ENCODE measurements at regions of chr3 and their contacts with region 1.

Region 1: GRCh38 chr3:33717866-33718594 is at the start of gene CLASP2:
- DNase-seq: peak; percentile 95
- ATAC-seq: peak; percentile 85
- H3K4me3 ChIP-seq: peak within 1 kb of the TSS; percentile 85 to 96 (median 92)
- H3K4me3 Mint-ChIP-seq: peak within 1 kb of the TSS; percentile 99
- H3K27ac ChIP-seq: peak within 1 kb of the TSS; percentile 90 to 94
- H3K27ac Mint-ChIP-seq: peak within 1 kb of the TSS; percentile 99
- H3K4me1 ChIP-seq: peaks cover 19 to 21% of the 10 kb centered on the region in 2 donors
- H3K4me1 Mint-ChIP-seq: peaks cover 20% of the 10 kb centered on the region
- H3K27me3 ChIP-seq: no peaks in the 10 kb centered on the region
- H3K27me3 Mint-ChIP-seq: no peaks in the 10 kb centered on the region
- CTCF ChIP-seq: no peak
- total RNA-seq, gene CLASP2: 109 and 113 TPM in 2 replicates

Region 2: DNA sequence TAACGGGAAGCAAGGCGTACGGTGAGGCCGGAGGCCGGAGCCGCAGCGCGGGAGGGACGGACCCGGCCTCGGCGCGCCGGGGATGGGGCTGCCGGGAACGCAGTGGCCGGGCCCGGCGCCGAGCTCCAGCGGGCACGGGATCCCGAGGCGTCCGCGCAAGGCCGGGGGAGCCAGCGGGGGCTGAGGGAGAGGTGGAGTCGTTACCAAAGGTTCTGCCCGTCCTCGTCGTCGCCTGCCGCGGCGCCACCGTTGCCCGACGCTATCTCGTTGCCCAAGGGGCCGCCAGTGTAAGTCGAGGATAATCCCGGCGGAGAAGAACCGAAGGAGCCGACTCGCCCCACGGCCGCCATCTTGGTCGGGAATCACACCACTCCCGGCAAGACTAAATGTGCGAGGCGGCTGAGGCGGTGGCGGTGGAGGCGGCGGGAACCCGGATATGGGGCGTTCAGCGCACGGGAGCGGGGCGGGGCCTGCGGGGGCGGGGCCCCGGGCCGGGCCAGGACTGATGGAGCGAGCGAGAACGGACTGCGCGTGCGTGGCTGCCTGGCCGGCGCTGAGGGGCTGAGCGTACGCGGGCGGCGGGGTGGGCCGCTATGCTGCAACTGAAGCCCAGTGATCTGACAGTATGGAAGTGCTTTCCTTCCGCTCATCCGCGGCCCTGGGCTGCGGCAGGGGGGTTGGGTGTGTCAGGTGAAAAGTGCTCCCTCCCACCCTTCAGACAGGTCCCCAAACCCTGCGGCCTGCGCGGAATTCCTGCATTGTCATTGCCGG is 1147.4 kb before region 1 on chr3 and contains the start of gene DYNC1LI1:
- CTCF ChIA-PET with region 1: no interaction called
- POLR2A ChIA-PET with region 1: no interaction called
- intact Hi-C with region 1: loop called (anchors 5 kb)
- DNase-seq: peak; percentile 95
- ATAC-seq: peak; percentile 96
- H3K4me3 ChIP-seq: peak within 1 kb of the TSS; percentile 55 to 96 (median 92)
- H3K4me3 Mint-ChIP-seq: peak within 1 kb of the TSS; percentile 94
- H3K27ac ChIP-seq: peak within 1 kb of the TSS; percentile 84 to 93
- H3K27ac Mint-ChIP-seq: peak within 1 kb of the TSS; percentile 94
- H3K4me1 ChIP-seq: peaks cover 22 to 24% of the 10 kb centered on the region in 2 donors
- H3K4me1 Mint-ChIP-seq: peaks cover 29% of the 10 kb centered on the region
- H3K27me3 ChIP-seq: no peaks in the 10 kb centered on the region
- H3K27me3 Mint-ChIP-seq: no peaks in the 10 kb centered on the region
- CTCF ChIP-seq: no peak
- total RNA-seq, gene DYNC1LI1: 38.8 and 47.8 TPM in 2 replicates

Region 3: GRCh38 chr3:33113772-33114621 is 604.0 kb before region 1 on chr3 and contains the start of gene CRTAP:
- CTCF ChIA-PET with region 1: no interaction called
- POLR2A ChIA-PET with region 1: no interaction called
- intact Hi-C with region 1: loop called (anchors 5 kb)
- DNase-seq: peak; percentile 89
- ATAC-seq: peak; percentile 87
- H3K4me3 ChIP-seq: peak within 1 kb of the TSS; percentile 59 to 82 (median 74)
- H3K4me3 Mint-ChIP-seq: peak within 1 kb of the TSS; percentile 94
- H3K27ac ChIP-seq: peak within 1 kb of the TSS; percentile 69 to 76
- H3K27ac Mint-ChIP-seq: peak within 1 kb of the TSS; percentile 94
- H3K4me1 ChIP-seq: peaks cover 43 to 44% of the 10 kb centered on the region in 2 donors
- H3K4me1 Mint-ChIP-seq: peaks cover 48% of the 10 kb centered on the region
- H3K27me3 ChIP-seq: no peaks in the 10 kb centered on the region
- H3K27me3 Mint-ChIP-seq: no peaks in the 10 kb centered on the region
- CTCF ChIP-seq: no peak
- total RNA-seq, gene CRTAP: 55.0 and 57.7 TPM in 2 replicates

Region 4: GRCh38 chr3:33440323-33441232 is 277.5 kb before region 1 on chr3 and contains the start of gene UBP1:
- CTCF ChIA-PET with region 1: no interaction called
- POLR2A ChIA-PET with region 1: interaction called, 4 read pairs
- intact Hi-C with region 1: loop called (anchors 1 kb)
- DNase-seq: peak; percentile 99
- ATAC-seq: peak; percentile 82
- H3K4me3 ChIP-seq: peak within 1 kb of the TSS; percentile 78 to 100 (median 96)
- H3K4me3 Mint-ChIP-seq: peak within 1 kb of the TSS; percentile 100
- H3K27ac ChIP-seq: peak within 1 kb of the TSS; percentile 95 to 97
- H3K27ac Mint-ChIP-seq: peak within 1 kb of the TSS; percentile 100
- H3K4me1 ChIP-seq: peaks cover 32% of the 10 kb centered on the region in 2 donors
- H3K4me1 Mint-ChIP-seq: peaks cover 48% of the 10 kb centered on the region
- H3K27me3 ChIP-seq: no peaks in the 10 kb centered on the region
- H3K27me3 Mint-ChIP-seq: no peaks in the 10 kb centered on the region
- CTCF ChIP-seq: no peak
- total RNA-seq, gene UBP1: 67.3 and 75.4 TPM in 2 replicates

Region 5: DNA sequence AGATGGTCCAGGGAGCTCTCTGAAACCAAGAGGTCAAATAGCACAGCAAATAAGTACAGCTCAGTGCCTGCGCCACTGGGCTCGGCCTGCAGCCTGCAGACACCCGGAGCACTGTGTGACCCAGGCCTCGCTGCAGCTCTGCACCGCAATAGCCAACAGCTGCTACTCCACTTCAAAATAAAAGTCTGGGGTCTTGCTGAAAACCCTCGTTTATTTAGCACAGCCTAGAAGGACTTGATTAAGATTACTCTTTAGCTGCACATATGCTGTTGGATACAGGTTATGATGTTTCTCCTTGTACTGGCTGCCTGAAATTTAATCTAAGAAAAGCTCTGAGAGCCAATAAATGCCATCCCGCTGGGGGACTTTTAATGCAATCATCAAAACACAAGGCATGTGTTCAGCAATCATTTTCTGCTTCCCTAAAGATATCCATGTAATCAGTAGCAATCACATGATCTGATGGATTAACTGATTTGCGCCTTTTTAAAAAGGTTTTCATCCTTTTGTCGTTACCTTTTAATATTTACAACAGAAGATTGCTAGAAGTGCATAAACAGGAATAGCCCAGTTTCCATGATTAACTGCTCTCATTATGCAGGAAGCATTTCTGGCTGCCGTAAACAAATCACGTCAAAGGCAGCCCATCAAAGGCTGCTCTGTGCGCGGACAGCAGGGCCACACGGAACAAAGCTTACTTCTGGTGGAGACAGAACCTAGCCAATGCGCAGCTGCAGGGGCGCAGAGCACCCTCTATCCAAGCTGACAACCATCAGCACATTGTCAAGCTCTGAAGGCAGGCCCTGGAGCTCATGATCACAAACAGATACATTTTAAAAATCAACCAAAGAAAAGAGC is 58.8 kb before region 1 on chr3:
- CTCF ChIA-PET with region 1: no interaction called
- POLR2A ChIA-PET with region 1: no interaction called
- intact Hi-C with region 1: loop called (anchors 1 kb)
- DNase-seq: peak; percentile 57
- ATAC-seq: peak; percentile 82
- H3K4me3 ChIP-seq: peak overlapping the region; percentile 16 to 53 (median 45)
- H3K4me3 Mint-ChIP-seq: peak overlapping the region; percentile 78
- H3K27ac ChIP-seq: peak overlapping the region; percentile 12 to 21
- H3K27ac Mint-ChIP-seq: peak overlapping the region; percentile 83
- H3K4me1 ChIP-seq: peaks cover 16 to 20% of the 10 kb centered on the region in 2 donors
- H3K4me1 Mint-ChIP-seq: peaks cover 32% of the 10 kb centered on the region
- H3K27me3 ChIP-seq: no peaks in the 10 kb centered on the region
- H3K27me3 Mint-ChIP-seq: no peaks in the 10 kb centered on the region
- CTCF ChIP-seq: no peak

Region 6: GRCh38 chr3:35659768-35660167 is 1941.7 kb after region 1 on chr3:
- CTCF ChIA-PET with region 1: no interaction called
- POLR2A ChIA-PET with region 1: no interaction called
- intact Hi-C with region 1: no loop called
- DNase-seq: no peak
- ATAC-seq: no peak
- H3K4me3 ChIP-seq: no peak overlapping the region
- H3K4me3 Mint-ChIP-seq: no peak overlapping the region
- H3K27ac ChIP-seq: no peak overlapping the region
- H3K27ac Mint-ChIP-seq: no peak overlapping the region
- H3K4me1 ChIP-seq: peaks cover 3 to 4% of the 10 kb centered on the region in 2 donors
- H3K4me1 Mint-ChIP-seq: peaks cover 3% of the 10 kb centered on the region
- H3K27me3 ChIP-seq: no peaks in the 10 kb centered on the region
- H3K27me3 Mint-ChIP-seq: peaks cover 7% of the 10 kb centered on the region
- CTCF ChIP-seq: no peak